ENCODE measurements at regions of chr1 and their contacts with region 1.

Region 1: DNA sequence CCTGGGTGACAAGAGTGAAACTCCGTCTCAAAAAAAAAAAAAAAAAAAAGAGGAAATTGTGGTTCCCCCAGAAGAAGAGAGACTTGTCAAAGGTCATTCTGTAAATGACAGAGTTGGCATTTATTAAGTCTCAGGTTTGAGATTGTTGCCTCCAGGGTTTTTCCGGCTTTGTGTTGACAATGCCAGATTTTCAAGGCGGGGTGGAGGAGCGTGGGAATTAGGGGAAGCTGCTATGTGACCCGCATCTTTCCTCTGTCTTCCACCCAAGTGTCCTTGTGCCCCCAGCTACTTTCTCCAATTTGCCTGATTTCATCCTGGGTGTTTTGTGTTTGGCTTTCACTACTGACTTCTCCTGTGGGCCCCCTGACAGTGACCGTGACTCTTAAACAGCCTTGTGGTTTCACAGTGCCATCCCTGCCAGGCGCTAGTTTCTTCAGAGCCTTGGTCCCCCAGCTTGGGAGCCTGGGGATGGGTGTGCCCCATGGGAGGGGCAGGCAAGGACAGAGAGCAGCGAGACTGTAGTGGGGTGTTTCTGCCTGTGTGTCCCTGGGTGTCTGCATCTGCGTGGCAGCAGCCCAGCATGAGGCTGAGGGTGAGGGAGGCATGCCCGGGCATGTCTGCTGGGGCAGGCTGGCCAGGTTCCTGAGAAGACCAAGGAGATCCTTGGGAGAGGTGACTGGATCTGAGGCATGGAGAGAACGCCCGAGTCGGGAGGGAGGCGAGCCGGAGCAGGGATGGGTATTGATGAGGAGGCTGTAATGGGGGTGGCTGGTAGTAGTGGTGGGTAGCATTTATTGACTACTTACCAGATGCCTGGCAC is 46.3 kb downstream of the IER5 start:
- DNase-seq: no peak
- H3K4me3 Mint-ChIP-seq: peak overlapping the region; percentile 57
- H3K27ac Mint-ChIP-seq: peak overlapping the region; percentile 93
- H3K4me1 Mint-ChIP-seq: peaks cover 69% of the 10 kb centered on the region
- H3K27me3 Mint-ChIP-seq: no peaks in the 10 kb centered on the region

Region 2: DNA sequence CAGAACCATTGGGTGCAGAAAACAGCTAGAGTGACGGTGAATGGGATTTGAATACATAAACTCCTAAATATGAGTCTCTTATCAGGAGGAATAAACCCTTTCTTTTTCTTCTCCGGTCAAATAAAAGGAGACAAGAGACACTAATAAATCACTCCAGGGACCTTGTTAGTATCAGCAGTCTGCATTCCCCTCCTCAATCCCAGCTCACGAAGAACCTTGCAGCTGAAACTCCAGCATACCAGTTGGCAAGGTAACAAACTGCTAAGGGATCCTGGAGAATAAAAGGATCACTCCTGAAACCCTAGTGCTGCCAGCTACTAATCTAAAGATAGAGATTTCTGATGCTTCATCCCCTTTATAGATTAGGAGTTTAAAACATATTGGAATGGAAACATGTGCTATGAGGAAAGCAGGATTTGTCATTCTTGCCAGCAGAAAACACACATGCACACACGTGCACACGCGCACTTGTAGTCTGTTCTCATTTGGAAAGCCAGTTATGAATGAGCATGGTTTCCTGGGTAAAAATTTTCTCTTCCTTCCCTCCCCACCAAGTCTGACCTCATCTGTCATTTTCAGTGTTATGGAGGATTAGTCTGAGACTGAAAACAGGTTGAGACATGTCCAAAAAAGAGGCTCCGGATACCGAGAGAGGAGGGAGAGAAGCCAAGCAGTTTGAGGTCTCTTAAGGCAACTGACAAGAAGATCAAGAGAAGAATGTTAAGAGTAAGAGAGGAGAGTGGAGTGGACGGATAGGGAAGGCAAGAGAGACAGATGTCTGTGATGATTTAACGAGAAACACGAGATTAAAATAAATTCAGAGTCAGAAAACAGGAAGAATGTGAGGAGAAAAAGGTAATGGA is 35.4 kb before region 1 on chr1:
- intact Hi-C with region 1: loop called (anchors 1 kb)
- DNase-seq: peak; percentile 45
- H3K4me3 Mint-ChIP-seq: peak overlapping the region; percentile 74
- H3K27ac Mint-ChIP-seq: peak overlapping the region; percentile 98
- H3K4me1 Mint-ChIP-seq: peaks cover 85% of the 10 kb centered on the region
- H3K27me3 Mint-ChIP-seq: no peaks in the 10 kb centered on the region